AG04449 (cell line): ENCODE measurements at regions of chr7 and their contacts with region 1.

Region 1: DNA sequence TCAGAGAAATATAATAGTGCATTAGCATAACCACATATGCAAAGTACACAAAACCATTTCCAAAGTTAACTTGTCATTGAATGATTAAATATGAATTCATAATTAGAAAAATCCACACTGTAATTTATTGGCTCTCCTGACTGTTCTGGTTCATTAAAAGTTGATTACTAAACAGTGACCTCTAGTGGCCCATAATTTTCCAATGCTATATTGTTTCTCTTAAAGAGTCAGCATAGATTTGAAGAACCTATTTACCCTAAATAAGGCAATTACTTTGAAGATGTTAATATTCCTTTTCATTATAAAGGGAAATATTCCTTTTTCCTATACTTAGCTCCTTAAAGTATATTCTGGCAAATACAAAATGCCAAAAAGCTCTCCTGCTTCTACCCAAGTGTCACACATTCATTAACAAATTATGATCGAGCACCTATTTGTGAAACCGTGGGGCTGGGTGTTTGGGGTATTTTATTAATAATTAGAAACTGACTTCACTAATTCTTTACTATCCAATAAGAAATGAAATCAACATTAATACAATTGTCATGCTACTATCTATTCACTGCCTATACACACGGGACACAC is 86.2 kb downstream of the HIBADH start:
- DNase-seq: no peak
- H3K4me3 ChIP-seq: no peak overlapping the region
- CTCF ChIP-seq: peak; percentile 37

Region 2: GRCh38 chr7:27564881-27565482 is 11.5 kb before region 1 on chr7:
- CTCF ChIA-PET with region 1: interaction called, 13 read pairs
- POLR2A ChIA-PET with region 1: no interaction called
- DNase-seq: no peak
- H3K4me3 ChIP-seq: no peak overlapping the region
- CTCF ChIP-seq: no peak

Region 3: DNA sequence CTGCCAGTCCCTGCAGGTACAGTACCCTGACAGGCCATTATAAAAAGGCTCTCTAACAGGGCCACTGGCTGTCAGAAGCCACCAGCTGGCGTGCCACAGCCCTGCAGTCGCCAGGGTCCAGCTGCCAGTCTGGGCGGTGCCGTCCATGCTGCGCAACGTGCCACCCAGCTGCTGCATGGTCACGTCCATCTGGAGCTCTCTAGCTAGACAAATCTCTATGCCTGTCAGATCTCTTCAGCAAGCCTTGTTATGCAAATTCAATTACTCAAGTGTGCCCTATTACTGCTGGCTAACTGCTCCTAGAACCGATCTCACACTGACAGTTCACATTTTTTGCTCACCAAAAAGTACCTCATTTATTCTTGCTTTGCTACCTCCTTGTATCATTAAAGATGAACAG is 10.4 kb after region 1 on chr7:
- CTCF ChIA-PET with region 1: interaction called, 34 read pairs
- POLR2A ChIA-PET with region 1: no interaction called
- DNase-seq: no peak
- H3K4me3 ChIP-seq: no peak overlapping the region
- CTCF ChIP-seq: no peak